ENCODE measurements at regions of chr3 and their contacts with region 1.

Region 1: GRCh38 chr3:47420511-47421484 is 40.0 kb downstream of the PTPN23 start:
- DNase-seq: peak; percentile 92
- H3K4me3 Mint-ChIP-seq: no peak overlapping the region
- H3K27ac Mint-ChIP-seq: peak overlapping the region; percentile 97
- H3K4me1 Mint-ChIP-seq: peaks cover 14% of the 10 kb centered on the region
- H3K27me3 Mint-ChIP-seq: no peaks in the 10 kb centered on the region

Region 2: DNA sequence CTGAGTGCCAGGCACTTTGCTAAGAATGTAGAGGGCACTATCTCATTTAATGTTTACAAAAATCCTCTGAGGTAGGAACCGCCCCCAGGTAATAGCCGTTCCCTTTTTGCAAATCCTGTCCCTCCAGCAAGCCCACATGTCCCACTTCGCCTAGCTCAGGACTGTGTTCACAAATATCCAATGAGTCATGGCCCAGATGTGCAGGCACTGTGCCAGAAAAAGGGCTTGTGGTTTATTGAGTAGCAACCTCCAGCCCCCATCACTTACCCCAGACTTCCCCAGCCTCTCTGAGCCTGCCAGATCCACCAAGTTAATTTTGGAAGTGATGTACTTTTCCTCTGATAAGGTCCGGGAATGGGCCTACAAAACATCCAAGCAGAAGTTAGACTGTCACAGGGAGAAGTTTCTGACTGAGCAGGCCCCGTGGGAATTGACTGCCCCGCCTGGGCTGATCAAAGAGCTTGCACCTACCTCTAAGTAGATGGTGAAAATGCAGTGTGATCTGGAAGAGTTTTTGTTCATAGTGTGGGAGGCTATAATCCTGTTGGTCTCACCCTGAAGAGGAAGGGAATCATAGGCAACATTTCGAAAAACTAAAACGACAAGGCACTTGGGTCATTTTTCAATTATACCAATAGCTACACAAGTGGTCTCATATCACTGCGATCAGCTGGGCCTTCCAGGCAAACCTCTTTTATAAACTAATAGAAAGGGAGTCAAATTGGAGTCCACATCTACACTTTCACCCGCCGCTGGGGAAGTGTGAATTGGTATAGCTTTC is 153.9 kb before region 1 on chr3:
- CTCF ChIA-PET with region 1: no interaction called
- POLR2A ChIA-PET with region 1: no interaction called
- DNase-seq: no peak
- H3K4me3 Mint-ChIP-seq: no peak overlapping the region
- H3K27ac Mint-ChIP-seq: no peak overlapping the region
- H3K4me1 Mint-ChIP-seq: peaks cover 5% of the 10 kb centered on the region
- H3K27me3 Mint-ChIP-seq: no peaks in the 10 kb centered on the region

Region 3: DNA sequence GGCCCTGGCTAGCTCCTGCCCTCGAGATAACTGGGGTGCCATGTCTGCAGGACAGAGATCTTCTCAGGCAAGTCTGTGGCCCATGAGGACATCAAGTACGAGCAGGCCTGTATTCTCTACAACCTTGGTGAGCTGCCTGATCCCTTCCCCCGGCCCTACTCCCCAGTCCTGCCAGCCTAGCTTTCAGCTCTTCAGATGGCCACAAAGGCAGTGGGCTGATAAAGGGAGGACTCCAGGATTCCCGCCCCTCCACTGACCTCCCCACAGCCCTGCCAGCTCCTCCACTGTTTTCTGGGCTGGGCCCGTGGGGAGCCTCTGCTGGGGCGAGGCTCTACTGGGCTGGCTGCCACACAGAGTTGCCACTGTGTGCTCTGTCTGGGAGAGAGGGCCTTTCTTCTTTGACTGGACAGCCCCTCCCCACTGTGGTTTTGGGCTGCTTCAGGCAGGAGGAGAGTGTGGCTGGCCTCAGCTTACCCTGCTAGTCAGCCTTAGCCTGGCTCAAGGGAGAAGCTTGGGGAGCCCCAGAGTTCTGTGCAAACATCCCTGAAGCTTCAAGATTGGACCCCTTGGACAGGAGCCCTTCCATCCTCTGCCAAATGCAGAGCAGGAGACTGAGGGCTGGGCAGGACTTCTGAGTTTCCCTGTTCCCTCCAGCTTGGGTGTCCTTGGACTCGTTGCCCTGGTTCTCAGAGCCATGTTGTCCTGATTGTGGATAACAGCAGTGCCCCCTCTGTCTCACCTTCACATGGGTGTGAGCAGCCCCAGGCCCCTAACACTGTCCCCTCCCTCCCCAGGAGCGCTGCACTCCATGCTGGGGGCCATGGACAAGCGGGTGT is 15.6 kb before region 1 on chr3:
- CTCF ChIA-PET with region 1: interaction called, 10 read pairs
- POLR2A ChIA-PET with region 1: interaction called, 4 read pairs
- DNase-seq: no peak
- H3K4me3 Mint-ChIP-seq: no peak overlapping the region
- H3K27ac Mint-ChIP-seq: no peak overlapping the region
- H3K4me1 Mint-ChIP-seq: peaks cover 10% of the 10 kb centered on the region
- H3K27me3 Mint-ChIP-seq: no peaks in the 10 kb centered on the region

Region 4: DNA sequence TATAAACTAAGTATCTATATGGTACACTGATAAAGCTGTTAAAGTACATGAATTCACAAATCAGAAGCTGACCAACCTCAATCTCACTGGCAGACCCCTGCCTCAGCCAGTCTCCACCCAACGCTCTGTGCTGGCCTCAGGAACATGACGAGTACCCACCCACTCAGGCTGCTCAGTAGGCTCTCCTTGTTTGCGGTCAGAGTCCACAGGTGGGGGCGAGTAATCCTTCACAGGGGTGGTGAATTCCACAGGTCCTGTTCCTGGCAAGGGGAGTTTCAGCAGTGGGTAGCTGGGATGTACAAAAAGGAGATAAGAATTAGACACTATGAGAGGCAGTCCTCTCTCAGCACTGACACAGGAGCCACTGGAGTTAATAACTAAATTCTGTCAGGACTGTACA is 14.1 kb after region 1 on chr3:
- CTCF ChIA-PET with region 1: interaction called, 12 read pairs
- POLR2A ChIA-PET with region 1: no interaction called
- DNase-seq: no peak
- H3K4me3 Mint-ChIP-seq: no peak overlapping the region
- H3K27ac Mint-ChIP-seq: no peak overlapping the region
- H3K4me1 Mint-ChIP-seq: peaks cover 9% of the 10 kb centered on the region
- H3K27me3 Mint-ChIP-seq: no peaks in the 10 kb centered on the region

Region 5: GRCh38 chr3:47475570-47476329 is 55.0 kb after region 1 on chr3 and contains the start of gene SCAP:
- CTCF ChIA-PET with region 1: interaction called, 61 read pairs
- POLR2A ChIA-PET with region 1: interaction called, 18 read pairs
- DNase-seq: peak; percentile 96
- H3K4me3 Mint-ChIP-seq: peak within 1 kb of the TSS; percentile 87
- H3K27ac Mint-ChIP-seq: peak within 1 kb of the TSS; percentile 80
- H3K4me1 Mint-ChIP-seq: peaks cover 31% of the 10 kb centered on the region
- H3K27me3 Mint-ChIP-seq: no peaks in the 10 kb centered on the region
- total RNA-seq, gene SCAP: 53.6 to 56.5 TPM

Region 6: GRCh38 chr3:47513125-47513929 is 92.5 kb after region 1 on chr3 and contains the start of gene ELP6:
- CTCF ChIA-PET with region 1: interaction called, 28 read pairs
- POLR2A ChIA-PET with region 1: interaction called, 3 read pairs
- DNase-seq: peak; percentile 97
- H3K4me3 Mint-ChIP-seq: peak within 1 kb of the TSS; percentile 98
- H3K27ac Mint-ChIP-seq: peak within 1 kb of the TSS; percentile 98
- H3K4me1 Mint-ChIP-seq: peaks cover 23% of the 10 kb centered on the region
- H3K27me3 Mint-ChIP-seq: peaks cover 8% of the 10 kb centered on the region
- total RNA-seq, gene ELP6: 34.9 to 36.6 TPM

Region 7: DNA sequence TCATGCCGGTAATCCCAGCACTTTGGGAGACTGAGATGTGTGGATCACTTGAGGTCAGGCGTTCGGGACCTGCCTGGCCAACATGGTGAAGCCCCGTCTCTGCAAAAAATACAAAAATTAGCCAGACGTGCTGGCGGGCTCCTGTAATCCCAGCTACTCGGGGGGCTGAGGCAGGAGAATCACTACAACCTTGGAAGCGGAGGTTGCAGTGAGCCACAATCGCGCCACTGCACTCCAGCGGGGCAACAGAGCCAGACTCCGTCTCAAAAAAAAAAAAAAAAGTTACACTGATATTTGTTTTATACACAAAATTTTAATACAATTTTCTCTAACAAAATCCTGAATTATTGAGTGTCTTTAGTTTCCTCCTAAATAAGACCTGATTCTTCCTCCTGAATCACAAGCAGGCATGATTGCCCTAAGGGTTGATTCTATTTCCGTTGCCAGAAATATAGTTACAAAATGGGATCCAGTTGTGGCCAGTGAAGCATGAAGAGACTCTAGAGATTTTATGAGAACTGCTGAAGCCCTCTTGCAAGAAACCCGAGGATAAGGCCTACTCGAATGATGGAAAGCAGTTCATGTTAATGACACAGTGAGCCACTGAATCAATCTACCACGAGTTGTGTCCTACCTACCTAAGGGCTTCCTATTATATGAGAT is 370.5 kb after region 1 on chr3:
- CTCF ChIA-PET with region 1: interaction called, 19 read pairs
- POLR2A ChIA-PET with region 1: interaction called, 3 read pairs
- DNase-seq: no peak
- H3K4me3 Mint-ChIP-seq: no peak overlapping the region
- H3K27ac Mint-ChIP-seq: no peak overlapping the region
- H3K4me1 Mint-ChIP-seq: peaks cover 4% of the 10 kb centered on the region
- H3K27me3 Mint-ChIP-seq: no peaks in the 10 kb centered on the region

Measured in activated CD4-positive, alpha-beta memory T cell treated with anti-CD3 and anti-CD28 coated beads, Interleukin-2, amount 10 ng/mL, durations not matched to agents 7 days and 5 days (primary cell).